ENCODE measurements at regions of chr12 and their contacts with region 1.

Region 1: DNA sequence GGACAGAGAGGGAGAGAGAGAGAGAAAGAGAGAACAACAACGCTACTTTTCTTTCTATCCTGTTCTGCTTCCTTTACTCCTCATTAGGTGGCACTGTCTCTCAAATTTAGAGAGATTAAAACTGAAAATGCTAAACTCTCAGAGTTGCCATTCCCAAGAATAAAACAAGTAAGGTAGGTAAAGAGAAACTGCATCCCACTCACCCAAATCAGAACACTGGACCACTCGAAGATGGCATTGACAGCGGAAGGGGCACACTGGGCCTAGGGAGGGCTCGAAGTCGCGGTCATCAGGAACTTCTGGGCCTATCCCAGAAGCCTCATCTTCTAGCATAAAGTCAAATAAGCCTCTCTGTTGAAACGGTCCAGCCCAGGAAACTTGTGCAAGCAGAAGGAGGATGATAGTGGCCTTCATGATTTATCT is 4.5 kb downstream of the DCN start:
- DNase-seq: peak; percentile 45 to 54 (median 48)
- H3K4me3 ChIP-seq: peak overlapping the region; percentile 50
- H3K27ac ChIP-seq: peak overlapping the region; percentile 83 to 89
- H3K4me1 ChIP-seq: peaks cover 5% of the 10 kb centered on the region
- H3K27me3 ChIP-seq: no peaks in the 10 kb centered on the region
- CTCF ChIP-seq: peak in 2 of 3 donors; percentile 63 to 70
- EP300 ChIP-seq: no peak
- POLR2A ChIP-seq: no peak

Region 2: GRCh38 chr12:90978117-90978770 is 199.9 kb before region 1 on chr12:
- intact Hi-C with region 1: loop called in 1 of 4 experiments (anchors 10 kb)
- DNase-seq: peak in 1 of 5 donors; percentile 23
- H3K4me3 ChIP-seq: no peak overlapping the region
- H3K27ac ChIP-seq: peak overlapping the region in 1 of 2 donors; percentile 76
- H3K4me1 ChIP-seq: peaks cover 2% of the 10 kb centered on the region
- H3K27me3 ChIP-seq: no peaks in the 10 kb centered on the region
- CTCF ChIP-seq: peak; percentile 52 to 92 (median 85)
- EP300 ChIP-seq: no peak
- POLR2A ChIP-seq: no peak

Region 3: DNA sequence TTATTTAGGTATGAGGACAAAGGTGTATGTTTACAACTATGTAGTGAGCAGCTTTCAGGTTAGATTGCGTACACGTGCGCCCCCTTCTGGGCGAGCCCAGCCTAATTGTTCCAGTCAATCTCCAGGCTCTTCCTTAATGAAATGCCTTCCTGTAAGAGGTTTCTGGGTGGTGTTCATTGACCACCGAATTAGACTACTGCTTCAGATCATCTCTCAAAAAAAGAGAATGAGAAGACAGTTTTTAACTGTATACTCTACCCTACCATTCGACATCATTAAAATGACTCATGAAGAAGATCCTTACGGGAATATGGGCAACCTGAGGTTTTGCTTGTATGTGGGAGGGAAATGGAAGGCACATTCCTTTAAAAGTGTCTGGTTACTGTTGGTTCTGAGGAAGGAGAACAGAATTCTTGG is 69.0 kb before region 1 on chr12:
- intact Hi-C with region 1: loop called in 1 of 4 experiments (anchors 5 kb)
- DNase-seq: peak; percentile 50 to 85 (median 66)
- H3K4me3 ChIP-seq: peak overlapping the region; percentile 32
- H3K27ac ChIP-seq: peak overlapping the region in 1 of 2 donors; percentile 5
- H3K4me1 ChIP-seq: peaks cover 2% of the 10 kb centered on the region
- H3K27me3 ChIP-seq: no peaks in the 10 kb centered on the region
- CTCF ChIP-seq: peak in 2 of 3 donors; percentile 38 to 71
- EP300 ChIP-seq: no peak
- POLR2A ChIP-seq: no peak

Region 4: GRCh38 chr12:91225316-91225715 is 47.2 kb after region 1 on chr12:
- intact Hi-C with region 1: loop called in 1 of 4 experiments (anchors 5 kb)
- DNase-seq: no peak
- H3K4me3 ChIP-seq: no peak overlapping the region
- H3K27ac ChIP-seq: no peak overlapping the region
- H3K4me1 ChIP-seq: peaks cover 1% of the 10 kb centered on the region
- H3K27me3 ChIP-seq: no peaks in the 10 kb centered on the region
- CTCF ChIP-seq: no peak
- EP300 ChIP-seq: no peak
- POLR2A ChIP-seq: no peak

Region 5: GRCh38 chr12:91240386-91241095 is 62.4 kb after region 1 on chr12:
- intact Hi-C with region 1: loop called in 2 of 4 experiments (anchors 5 to 10 kb)
- DNase-seq: no peak
- H3K4me3 ChIP-seq: no peak overlapping the region
- H3K27ac ChIP-seq: peak overlapping the region in 1 of 2 donors; percentile 82
- H3K4me1 ChIP-seq: peaks cover 3% of the 10 kb centered on the region
- H3K27me3 ChIP-seq: no peaks in the 10 kb centered on the region
- CTCF ChIP-seq: no peak
- EP300 ChIP-seq: no peak
- POLR2A ChIP-seq: no peak

Region 6: DNA sequence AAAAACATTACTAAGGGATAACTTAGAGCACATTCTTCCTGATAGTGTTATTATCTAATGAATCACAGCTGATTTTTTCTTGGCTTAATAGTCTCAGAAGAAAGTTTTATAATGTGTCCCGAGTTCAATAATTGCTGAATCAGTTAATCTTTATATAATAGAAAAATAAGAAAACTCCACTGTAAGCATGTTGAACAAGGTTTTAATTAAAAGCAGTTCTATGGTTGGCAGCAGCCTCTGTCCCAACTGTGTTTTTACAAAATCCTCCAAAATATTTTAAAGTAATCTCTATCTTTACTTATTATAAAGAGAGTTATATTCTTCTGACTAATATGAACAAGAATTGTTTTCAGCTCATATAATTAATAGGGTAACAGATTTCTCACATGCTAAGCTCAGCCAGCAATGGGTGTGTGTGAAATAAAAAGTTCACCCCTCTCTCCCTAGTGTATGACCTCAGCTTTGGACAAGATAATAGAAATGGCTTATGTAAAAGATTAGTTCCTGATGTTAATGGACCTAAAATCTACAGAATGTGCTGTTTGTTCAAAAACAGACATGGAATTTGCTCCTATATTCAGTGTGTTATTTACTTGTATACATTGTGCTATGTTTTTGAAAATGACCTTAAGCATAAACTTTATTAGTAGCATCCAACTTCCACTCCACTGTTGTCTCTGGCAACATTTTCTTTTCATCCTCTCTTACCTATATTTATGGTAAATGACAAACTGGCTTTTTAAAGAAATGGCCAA is 71.5 kb after region 1 on chr12:
- intact Hi-C with region 1: loop called in 2 of 4 experiments (anchors 5 to 10 kb)
- DNase-seq: no peak
- H3K4me3 ChIP-seq: no peak overlapping the region
- H3K27ac ChIP-seq: peak overlapping the region; percentile 1 to 75
- H3K4me1 ChIP-seq: no peaks in the 10 kb centered on the region
- H3K27me3 ChIP-seq: no peaks in the 10 kb centered on the region
- CTCF ChIP-seq: no peak
- EP300 ChIP-seq: no peak
- POLR2A ChIP-seq: no peak

Region 7: GRCh38 chr12:91326058-91327027 is 148.2 kb after region 1 on chr12:
- intact Hi-C with region 1: loop called (anchors 2 to 5 kb)
- DNase-seq: peak in 4 of 5 donors; percentile 27 to 72 (median 52)
- H3K4me3 ChIP-seq: no peak overlapping the region
- H3K27ac ChIP-seq: peak overlapping the region in 1 of 2 donors; percentile 54
- H3K4me1 ChIP-seq: peaks cover 2% of the 10 kb centered on the region
- H3K27me3 ChIP-seq: no peaks in the 10 kb centered on the region
- CTCF ChIP-seq: peak; percentile 41 to 86 (median 78)
- EP300 ChIP-seq: no peak
- POLR2A ChIP-seq: no peak

Region 8: GRCh38 chr12:91753649-91754048 is 575.5 kb after region 1 on chr12:
- intact Hi-C with region 1: no loop called
- DNase-seq: no peak
- H3K4me3 ChIP-seq: no peak overlapping the region
- H3K27ac ChIP-seq: no peak overlapping the region
- H3K4me1 ChIP-seq: no peaks in the 10 kb centered on the region
- H3K27me3 ChIP-seq: no peaks in the 10 kb centered on the region
- CTCF ChIP-seq: no peak
- EP300 ChIP-seq: no peak
- POLR2A ChIP-seq: no peak